ENCODE measurements at regions of chr7 and their contacts with region 1.

Region 1: GRCh38 chr7:27662490-27663205 is at the start of gene HIBADH:
- DNase-seq: peak; percentile 99 to 100
- H3K4me3 ChIP-seq: peak within 1 kb of the TSS; percentile 76 to 92
- H3K27ac ChIP-seq: peak within 1 kb of the TSS; percentile 79 to 91
- H3K4me1 ChIP-seq: peaks cover 0 to 3% of the 10 kb centered on the region in 2 donors
- H3K27me3 ChIP-seq: no peaks in the 10 kb centered on the region
- CTCF ChIP-seq: peak in 2 of 3 experiments; percentile 18 to 23
- total RNA-seq, gene HIBADH: 10.6 TPM

Region 2: DNA sequence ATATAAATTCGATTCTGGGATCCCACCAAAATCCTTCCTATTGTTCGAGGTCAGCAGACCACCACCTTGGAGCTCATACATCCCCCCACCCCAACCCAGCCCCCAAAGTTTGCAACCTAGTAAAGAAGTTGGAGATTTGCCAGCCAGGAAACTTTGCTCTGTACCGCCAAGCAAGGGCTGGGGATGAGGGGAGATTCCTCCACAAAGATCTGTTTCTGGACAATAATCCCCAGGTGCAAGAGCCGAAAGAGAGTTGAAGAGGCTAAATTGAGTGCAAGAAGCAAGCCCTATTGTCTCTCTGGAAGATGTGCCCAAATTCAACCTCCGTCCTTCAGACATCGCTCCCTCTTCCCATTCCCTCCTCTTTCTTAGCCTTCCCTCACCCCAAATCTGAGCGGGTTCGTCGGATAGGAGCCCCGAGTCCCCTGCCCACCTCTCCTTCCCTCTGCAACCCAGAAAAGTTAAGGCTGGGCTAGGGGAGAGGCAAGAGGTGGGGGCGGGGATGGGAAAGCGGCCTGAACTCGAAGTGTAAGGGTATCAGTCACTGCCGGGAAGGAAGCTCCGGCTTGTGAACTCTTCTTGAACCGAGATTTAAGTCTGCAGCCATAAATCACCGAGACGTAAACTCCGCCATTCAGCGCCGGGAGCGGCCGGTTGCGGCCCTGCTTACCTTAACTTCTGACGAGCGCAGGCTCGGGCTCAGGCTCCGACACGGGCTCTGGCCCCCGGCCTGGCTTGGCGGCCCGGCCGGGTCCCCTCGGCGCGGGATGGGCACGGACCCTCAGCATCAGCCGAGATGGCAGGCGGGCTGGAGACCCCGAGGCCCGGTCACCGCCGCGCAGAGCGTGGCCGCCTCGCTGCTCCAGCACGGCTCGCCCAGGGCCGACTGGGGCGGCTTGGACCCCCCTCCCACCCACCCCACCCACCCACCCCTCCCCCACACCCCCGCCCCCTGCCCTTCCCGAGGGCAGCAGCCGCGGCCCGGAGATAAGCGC is 549.4 kb before region 1 on chr7:
- intact Hi-C with region 1: loop called (anchors 5 kb)
- DNase-seq: no peak
- H3K4me3 ChIP-seq: peak overlapping the region; percentile 63 to 81
- H3K27ac ChIP-seq: peak overlapping the region; percentile 89 to 97
- H3K4me1 ChIP-seq: peaks cover 8 to 15% of the 10 kb centered on the region in 2 donors
- H3K27me3 ChIP-seq: no peaks in the 10 kb centered on the region
- CTCF ChIP-seq: no peak

Region 3: DNA sequence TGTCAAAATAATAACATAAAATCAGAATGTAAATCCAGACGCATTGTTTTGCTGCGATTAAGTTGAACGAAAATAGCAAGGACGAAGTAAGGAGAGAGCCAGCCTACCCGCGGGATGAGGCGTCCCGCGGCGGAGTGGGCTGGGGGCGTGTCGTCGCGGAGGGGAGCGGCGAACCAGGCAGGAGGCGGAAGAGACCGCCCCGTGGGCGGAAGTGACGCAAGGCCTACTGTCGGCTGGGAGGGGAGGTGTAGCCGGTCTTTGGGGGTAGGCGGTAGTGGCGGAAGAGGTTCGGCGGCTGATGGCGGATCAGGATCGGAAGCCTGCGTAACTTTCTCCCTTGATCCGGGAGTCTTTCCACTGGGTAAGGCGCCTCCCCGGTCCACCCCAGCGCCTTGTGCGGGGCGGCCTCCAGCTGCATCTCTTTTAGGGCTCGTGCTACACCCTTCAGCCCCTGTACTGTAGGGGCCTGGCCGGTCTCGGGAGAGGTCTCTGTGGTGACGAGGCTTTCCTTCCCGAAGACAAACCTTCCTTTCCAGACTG is 77.3 kb after region 1 on chr7 and contains the start of gene TAX1BP1:
- intact Hi-C with region 1: loop called (anchors 1 kb)
- DNase-seq: peak; percentile 74 to 97
- H3K4me3 ChIP-seq: peak within 1 kb of the TSS; percentile 87 to 97
- H3K27ac ChIP-seq: peak within 1 kb of the TSS; percentile 99
- H3K4me1 ChIP-seq: peaks cover 5 to 20% of the 10 kb centered on the region in 2 donors
- H3K27me3 ChIP-seq: no peaks in the 10 kb centered on the region
- CTCF ChIP-seq: no peak
- total RNA-seq, gene TAX1BP1: 32.6 TPM

Region 4: DNA sequence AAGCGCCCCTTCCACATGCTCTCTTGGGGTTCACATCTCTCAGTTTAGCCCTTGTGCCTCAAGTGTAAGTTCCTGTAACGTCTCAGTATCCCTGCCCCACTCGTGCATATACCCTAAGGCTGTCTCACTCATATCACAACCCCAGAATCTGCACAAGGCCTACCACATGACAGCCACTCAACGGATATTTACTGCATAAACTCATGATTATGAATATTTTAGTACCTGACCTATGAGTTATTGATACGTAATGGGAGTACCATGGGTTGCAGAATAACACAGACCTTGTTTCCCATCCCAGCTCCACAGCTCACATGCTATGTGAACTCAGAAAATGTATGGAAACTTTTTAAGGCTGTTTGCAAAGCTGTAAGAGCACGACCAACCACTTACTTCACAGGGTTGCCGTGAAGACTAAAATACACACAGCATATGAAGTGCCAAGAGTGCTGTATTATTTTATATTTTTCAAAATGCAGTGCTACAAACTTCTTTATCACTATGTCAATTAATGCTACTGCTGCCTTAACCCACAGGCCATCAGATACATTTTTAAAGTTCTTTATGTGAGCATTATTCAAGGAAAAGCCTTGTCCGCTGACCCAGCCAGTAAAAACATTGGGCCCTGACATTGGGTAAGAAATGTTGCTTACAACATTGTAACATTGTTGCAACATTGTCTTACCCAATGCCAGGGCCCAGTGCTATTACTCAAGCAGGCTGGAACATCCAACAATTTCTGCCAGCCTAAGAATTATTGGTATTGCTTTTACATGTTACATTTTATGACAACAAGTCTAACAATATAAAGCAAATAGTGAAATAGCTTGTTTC is 420.7 kb after region 1 on chr7:
- intact Hi-C with region 1: loop called (anchors 5 kb)
- DNase-seq: peak in 1 of 2 donors; percentile 85
- H3K4me3 ChIP-seq: no peak overlapping the region
- H3K27ac ChIP-seq: peak overlapping the region in 1 of 2 donors; percentile 49
- H3K4me1 ChIP-seq: peaks cover 0 to 25% of the 10 kb centered on the region in 2 donors
- H3K27me3 ChIP-seq: no peaks in the 10 kb centered on the region
- CTCF ChIP-seq: no peak

Region 5: GRCh38 chr7:28685644-28686417 is 1023.2 kb after region 1 on chr7:
- intact Hi-C with region 1: loop called (anchors 10 kb)
- DNase-seq: peak; percentile 88 to 99
- H3K4me3 ChIP-seq: peak overlapping the region; percentile 27 to 66
- H3K27ac ChIP-seq: peak overlapping the region; percentile 80 to 92
- H3K4me1 ChIP-seq: peaks cover 4 to 14% of the 10 kb centered on the region in 2 donors
- H3K27me3 ChIP-seq: no peaks in the 10 kb centered on the region
- CTCF ChIP-seq: no peak

Measured in ascending aorta (tissue), 2 donors.